ENCODE measurements at regions of chr4 and their contacts with region 1.

Region 1: DNA sequence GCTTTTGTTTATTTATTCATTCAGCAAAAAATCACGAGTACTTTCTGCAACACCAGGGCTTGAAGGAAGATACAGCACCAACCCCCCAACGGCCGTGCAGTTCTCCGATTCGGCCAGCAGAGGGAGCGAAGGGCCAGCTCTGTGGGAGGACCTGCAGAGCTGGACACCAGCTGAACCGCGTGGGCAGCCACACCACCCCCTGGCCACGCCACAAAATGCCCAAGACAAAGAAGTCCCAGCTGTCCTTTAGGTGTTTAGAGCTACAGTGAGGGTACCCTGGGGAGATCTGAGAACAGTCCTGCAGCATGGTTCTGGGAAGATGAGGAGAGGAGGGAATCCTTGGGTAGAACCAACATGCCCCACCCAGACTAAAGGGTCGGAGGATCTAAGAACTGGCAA is 83.1 kb downstream of the RELL1 start:
- DNase-seq: peak; percentile 83
- H3K4me3 Mint-ChIP-seq: no peak overlapping the region
- H3K27ac Mint-ChIP-seq: no peak overlapping the region
- H3K4me1 Mint-ChIP-seq: peaks cover 13% of the 10 kb centered on the region
- H3K27me3 Mint-ChIP-seq: peaks cover 4% of the 10 kb centered on the region

Region 2: GRCh38 chr4:37779896-37780295 is 176.8 kb after region 1 on chr4:
- CTCF ChIA-PET with region 1: interaction called, 12 read pairs
- DNase-seq: no peak
- H3K4me3 Mint-ChIP-seq: no peak overlapping the region
- H3K27ac Mint-ChIP-seq: peak overlapping the region; percentile 83
- H3K4me1 Mint-ChIP-seq: peaks cover 27% of the 10 kb centered on the region
- H3K27me3 Mint-ChIP-seq: peaks cover 4% of the 10 kb centered on the region